ENCODE measurements at regions of chr1 and their contacts with region 1.

Region 1: GRCh38 chr1:94270801-94271203 is 33.4 kb upstream of the ARHGAP29 start:
- DNase-seq: no peak
- H3K4me3 ChIP-seq: no peak overlapping the region
- H3K27ac ChIP-seq: no peak overlapping the region
- H3K4me1 ChIP-seq: no peaks in the 10 kb centered on the region
- H3K27me3 ChIP-seq: peaks cover 0 to 1% (median 0%) of the 10 kb centered on the region in 4 experiments; a peak in 3 of 7 replicates
- CTCF ChIP-seq: no peak
- EP300 ChIP-seq: no peak
- POLR2A ChIP-seq: no peak
- RAD21 ChIP-seq: no peak

Region 2: GRCh38 chr1:94299627-94300552 is 29.1 kb after region 1 on chr1:
- CTCF ChIA-PET with region 1: interaction called, 10 read pairs
- POLR2A ChIA-PET with region 1: no interaction called
- DNase-seq: no peak
- H3K4me3 ChIP-seq: no peak overlapping the region
- H3K27ac ChIP-seq: no peak overlapping the region
- H3K4me1 ChIP-seq: peaks cover 0 to 8% (median under 1%) of the 10 kb centered on the region in 4 experiments; a peak in 1 of 7 replicates
- H3K27me3 ChIP-seq: no peaks in the 10 kb centered on the region
- CTCF ChIP-seq: no peak
- EP300 ChIP-seq: no peak
- POLR2A ChIP-seq: no peak
- RAD21 ChIP-seq: no peak

Region 3: GRCh38 chr1:94351485-94351884 is 80.7 kb after region 1 on chr1:
- CTCF ChIA-PET with region 1: no interaction called
- POLR2A ChIA-PET with region 1: no interaction called
- DNase-seq: no peak
- H3K4me3 ChIP-seq: no peak overlapping the region
- H3K27ac ChIP-seq: no peak overlapping the region
- H3K4me1 ChIP-seq: no peaks in the 10 kb centered on the region
- H3K27me3 ChIP-seq: no peaks in the 10 kb centered on the region; a peak in 1 of 7 replicates
- CTCF ChIP-seq: no peak
- EP300 ChIP-seq: no peak
- POLR2A ChIP-seq: no peak
- RAD21 ChIP-seq: no peak

Region 4: GRCh38 chr1:94693029-94693428 is 422.2 kb after region 1 on chr1:
- CTCF ChIA-PET with region 1: no interaction called
- POLR2A ChIA-PET with region 1: no interaction called
- DNase-seq: peak in 1 of 2 experiments; percentile 59
- H3K4me3 ChIP-seq: no peak overlapping the region
- H3K27ac ChIP-seq: no peak overlapping the region
- H3K4me1 ChIP-seq: peaks cover 0 to 21% (median 6%) of the 10 kb centered on the region in 4 experiments; a peak in 6 of 7 replicates
- H3K27me3 ChIP-seq: no peaks in the 10 kb centered on the region
- CTCF ChIP-seq: peak; percentile 62 to 77 (median 75)
- EP300 ChIP-seq: no peak
- POLR2A ChIP-seq: no peak
- RAD21 ChIP-seq: peak; percentile 51 to 69

Measured in H1 (cell line).